OCI-LY7 (cell line): ENCODE measurements at regions of chr4 and their contacts with region 1.

Region 1: GRCh38 chr4:7067452-7068278 is at the start of gene GRPEL1:
- DNase-seq: peak; percentile 99
- H3K4me3 ChIP-seq: peak within 1 kb of the TSS; percentile 94
- H3K27ac ChIP-seq: peak within 1 kb of the TSS; percentile 50
- H3K4me1 ChIP-seq: peaks cover 27% of the 10 kb centered on the region
- CTCF ChIP-seq: 0 out of 2 replicates have a peak, but pooled peaks have one; percentile 27
- total RNA-seq, gene GRPEL1: 27.4 and 33.4 TPM in 2 replicates

Region 2: GRCh38 chr4:6109842-6110719 is 957.6 kb before region 1 on chr4:
- CTCF ChIA-PET with region 1: no interaction called
- POLR2A ChIA-PET with region 1: no interaction called
- intact Hi-C with region 1: no loop called
- DNase-seq: peak; percentile 20
- H3K4me3 ChIP-seq: no peak overlapping the region
- H3K27ac ChIP-seq: no peak overlapping the region
- H3K4me1 ChIP-seq: no peaks in the 10 kb centered on the region
- CTCF ChIP-seq: peak; percentile 64

Region 3: DNA sequence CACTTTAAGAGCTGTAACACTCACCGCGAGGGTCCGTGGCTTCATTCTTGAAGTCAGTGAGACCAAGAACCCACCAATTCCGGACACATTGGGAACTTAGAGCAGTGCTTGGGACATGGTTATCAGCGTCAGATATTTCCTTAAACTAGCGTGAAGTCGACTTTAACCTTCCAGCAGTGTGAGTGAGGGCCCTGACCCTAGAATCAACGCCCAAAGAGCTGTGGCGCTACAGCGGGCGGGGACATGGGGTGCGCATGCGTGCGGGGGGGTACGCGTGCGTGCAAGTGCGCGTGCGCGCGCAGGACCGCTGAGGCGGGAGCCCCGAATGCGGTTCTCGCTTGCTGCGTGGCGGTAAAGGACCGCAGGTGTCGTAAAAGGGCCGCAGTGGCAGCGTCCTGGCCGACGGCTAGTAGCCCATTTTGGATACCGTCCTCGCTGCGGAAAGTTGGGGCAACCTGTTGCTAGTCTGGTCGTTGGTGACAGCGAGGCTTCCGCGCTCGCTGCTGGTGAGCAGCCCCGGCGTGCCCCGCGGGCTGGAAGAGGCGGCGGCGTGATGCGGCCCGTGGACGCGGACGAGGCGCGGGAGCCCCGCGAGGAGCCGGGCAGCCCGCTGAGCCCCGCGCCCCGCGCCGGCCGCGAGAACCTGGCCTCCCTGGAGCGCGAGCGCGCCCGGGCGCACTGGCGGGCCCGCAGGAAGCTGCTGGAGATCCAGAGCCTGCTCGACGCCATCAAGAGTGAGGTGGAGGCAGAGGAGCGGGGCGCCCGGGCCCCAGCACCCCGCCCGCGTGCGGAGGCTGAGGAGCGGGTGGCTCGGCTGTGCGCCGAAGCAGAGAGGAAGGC is 393.8 kb before region 1 on chr4:
- CTCF ChIA-PET with region 1: no interaction called
- POLR2A ChIA-PET with region 1: no interaction called
- intact Hi-C with region 1: loop called (anchors 1 kb)
- DNase-seq: peak; percentile 93
- H3K4me3 ChIP-seq: peak overlapping the region; percentile 78
- H3K27ac ChIP-seq: peak overlapping the region; percentile 85
- H3K4me1 ChIP-seq: peaks cover 24% of the 10 kb centered on the region
- CTCF ChIP-seq: no peak

Region 4: GRCh38 chr4:6783053-6783981 is 284.3 kb before region 1 on chr4:
- CTCF ChIA-PET with region 1: no interaction called
- POLR2A ChIA-PET with region 1: interaction called, 3 read pairs
- intact Hi-C with region 1: loop called (anchors 2 kb)
- DNase-seq: peak; percentile 87
- H3K4me3 ChIP-seq: peak overlapping the region; percentile 95
- H3K27ac ChIP-seq: peak overlapping the region; percentile 87
- H3K4me1 ChIP-seq: peaks cover 18% of the 10 kb centered on the region
- CTCF ChIP-seq: peak; percentile 51; the same call in 1 of the 2 replicates

Region 5: DNA sequence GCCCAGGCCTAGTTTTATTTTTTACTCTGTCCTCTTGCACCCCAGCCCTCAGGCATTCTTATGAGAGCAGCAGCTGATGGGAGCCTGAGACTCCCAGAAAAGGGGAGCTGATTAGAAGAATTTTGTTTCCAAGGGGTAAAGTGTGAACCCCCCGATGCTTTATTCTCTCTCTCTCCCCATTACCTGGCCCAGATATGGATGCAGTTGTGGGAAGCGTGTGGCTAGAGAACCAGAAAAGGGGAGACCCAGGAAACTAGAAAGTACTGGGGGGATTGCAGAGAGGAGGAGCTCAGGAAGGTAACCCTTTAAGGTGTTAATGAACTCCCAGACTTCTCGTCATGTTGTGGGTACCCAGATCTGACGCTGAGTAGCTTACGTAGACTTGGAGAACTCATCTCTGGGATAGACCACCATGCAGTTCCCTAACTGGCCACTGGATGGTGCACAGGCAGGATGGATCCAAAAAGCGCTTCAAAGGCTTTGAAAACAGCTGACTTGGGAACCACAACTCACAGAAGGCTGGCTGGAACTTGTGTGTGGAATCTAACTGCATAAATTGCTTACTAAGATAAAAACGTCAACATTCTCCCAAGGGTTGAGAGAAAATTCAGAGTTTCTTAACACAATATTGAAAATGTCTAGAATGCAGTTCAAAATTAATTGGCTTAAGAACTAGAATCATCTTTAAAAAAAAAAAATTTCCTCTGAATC is 93.4 kb before region 1 on chr4:
- CTCF ChIA-PET with region 1: interaction called, 7 read pairs
- POLR2A ChIA-PET with region 1: interaction called, 5 read pairs
- intact Hi-C with region 1: loop called (anchors 2 kb)
- DNase-seq: peak; percentile 83
- H3K4me3 ChIP-seq: no peak overlapping the region
- H3K27ac ChIP-seq: no peak overlapping the region
- H3K4me1 ChIP-seq: peaks cover 38% of the 10 kb centered on the region
- CTCF ChIP-seq: peak; percentile 93

Region 6: DNA sequence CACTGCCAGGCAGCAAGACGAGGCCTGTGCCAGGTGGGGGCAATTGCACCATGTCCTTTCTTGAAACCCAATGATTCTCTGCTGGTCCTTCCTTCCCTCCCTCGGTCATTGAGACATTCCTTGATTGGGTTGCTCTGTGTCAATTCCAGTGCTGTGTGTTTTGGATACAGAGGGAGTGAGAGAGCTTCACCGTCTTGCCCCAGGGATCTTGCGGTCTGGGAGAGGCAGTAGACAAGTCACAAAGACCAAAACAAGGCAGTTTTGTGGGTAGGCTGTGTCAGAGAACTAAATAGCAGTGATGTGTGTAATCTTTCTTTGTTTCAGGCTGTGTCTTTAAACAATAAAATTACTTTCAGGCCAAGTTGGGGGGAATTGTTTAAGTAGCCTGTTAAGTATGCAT is 63.3 kb before region 1 on chr4:
- CTCF ChIA-PET with region 1: no interaction called
- POLR2A ChIA-PET with region 1: no interaction called
- intact Hi-C with region 1: no loop called
- DNase-seq: no peak
- H3K4me3 ChIP-seq: no peak overlapping the region
- H3K27ac ChIP-seq: no peak overlapping the region
- H3K4me1 ChIP-seq: no peaks in the 10 kb centered on the region
- CTCF ChIP-seq: no peak

Region 7: DNA sequence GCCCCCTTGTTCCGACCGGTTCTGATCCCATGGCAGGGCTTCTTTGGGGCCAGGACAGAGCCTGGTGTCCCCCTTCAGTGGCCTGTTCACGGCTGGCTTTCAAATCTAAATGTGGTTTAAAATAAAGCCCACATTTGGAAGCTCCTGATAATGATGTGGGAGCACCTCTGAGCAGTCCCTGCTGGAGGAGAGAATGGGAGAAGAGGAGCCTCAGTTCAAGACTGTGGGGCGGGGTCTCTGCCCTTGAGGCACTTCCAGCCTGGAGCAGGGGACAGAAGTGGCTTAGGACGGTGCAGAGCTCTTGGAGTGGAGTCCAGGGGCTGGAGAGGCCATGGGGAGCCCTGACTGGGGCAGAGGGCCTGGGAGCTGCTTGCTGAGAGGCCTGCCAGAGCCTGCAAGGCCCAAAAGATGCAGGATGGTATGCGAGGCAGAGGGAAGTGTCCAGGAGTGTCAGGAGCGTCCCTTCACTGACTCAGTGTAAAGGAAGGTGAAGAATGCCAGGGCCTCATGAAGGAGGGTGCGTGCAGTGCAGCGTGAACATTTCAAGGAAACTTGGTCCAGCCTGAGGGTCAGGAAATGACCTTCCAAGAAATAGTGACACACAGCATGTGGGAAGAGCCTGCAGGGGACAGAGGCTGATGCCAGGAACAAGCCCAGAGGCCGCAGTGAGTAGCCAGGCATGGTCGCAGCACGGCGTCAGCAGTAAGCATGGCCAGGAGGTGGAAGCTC is 45.6 kb before region 1 on chr4:
- CTCF ChIA-PET with region 1: no interaction called
- POLR2A ChIA-PET with region 1: no interaction called
- intact Hi-C with region 1: loop called (anchors 1 kb)
- DNase-seq: no peak
- H3K4me3 ChIP-seq: no peak overlapping the region
- H3K27ac ChIP-seq: no peak overlapping the region
- H3K4me1 ChIP-seq: no peaks in the 10 kb centered on the region
- CTCF ChIP-seq: no peak

Region 8: GRCh38 chr4:7089213-7089986 is 21.7 kb after region 1 on chr4:
- CTCF ChIA-PET with region 1: no interaction called
- POLR2A ChIA-PET with region 1: no interaction called
- intact Hi-C with region 1: no loop called
- DNase-seq: no peak
- H3K4me3 ChIP-seq: no peak overlapping the region
- H3K27ac ChIP-seq: no peak overlapping the region
- H3K4me1 ChIP-seq: no peaks in the 10 kb centered on the region
- CTCF ChIP-seq: no peak